ENCODE measurements at regions of chr1 and their contacts with region 1.

Region 1: GRCh38 chr1:95730985-95731384 is 497.0 kb downstream of the RWDD3 start:
- DNase-seq: no peak
- ATAC-seq: no peak
- H3K4me3 ChIP-seq: no peak overlapping the region
- H3K27ac ChIP-seq: no peak overlapping the region
- H3K4me1 ChIP-seq: no peaks in the 10 kb centered on the region
- H3K27me3 ChIP-seq: no peaks in the 10 kb centered on the region
- CTCF ChIP-seq: no peak
- POLR2A ChIP-seq: no peak
- RAD21 ChIP-seq: no peak

Region 2: DNA sequence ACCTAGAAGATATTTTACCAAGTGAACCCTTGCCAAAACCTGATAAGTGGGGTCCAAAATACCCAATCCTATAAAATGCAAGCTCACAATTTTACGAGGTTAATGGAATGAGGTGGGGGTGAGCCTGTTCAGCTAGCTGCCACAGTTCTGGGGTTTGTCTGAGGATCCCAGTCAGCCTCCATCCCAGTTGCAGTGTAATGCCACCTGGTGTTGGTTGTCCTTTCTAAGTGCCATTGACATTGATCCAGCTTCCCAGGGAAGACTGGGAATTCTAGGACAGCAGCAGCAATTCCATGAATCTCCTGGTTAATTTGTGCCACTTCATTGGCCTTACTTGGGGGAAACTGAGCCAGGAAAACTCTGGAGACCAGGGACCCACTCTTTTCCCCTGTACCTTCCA is 198.7 kb before region 1 on chr1:
- CTCF ChIA-PET with region 1: no interaction called
- POLR2A ChIA-PET with region 1: no interaction called
- dilution Hi-C with region 1: no loop called
- in situ Hi-C with region 1: no loop called
- intact Hi-C with region 1: no loop called
- DNase-seq: no peak
- ATAC-seq: no peak
- H3K4me3 ChIP-seq: no peak overlapping the region
- H3K27ac ChIP-seq: no peak overlapping the region
- H3K4me1 ChIP-seq: no peaks in the 10 kb centered on the region
- H3K27me3 ChIP-seq: no peaks in the 10 kb centered on the region
- CTCF ChIP-seq: no peak
- POLR2A ChIP-seq: no peak
- RAD21 ChIP-seq: no peak

Region 3: DNA sequence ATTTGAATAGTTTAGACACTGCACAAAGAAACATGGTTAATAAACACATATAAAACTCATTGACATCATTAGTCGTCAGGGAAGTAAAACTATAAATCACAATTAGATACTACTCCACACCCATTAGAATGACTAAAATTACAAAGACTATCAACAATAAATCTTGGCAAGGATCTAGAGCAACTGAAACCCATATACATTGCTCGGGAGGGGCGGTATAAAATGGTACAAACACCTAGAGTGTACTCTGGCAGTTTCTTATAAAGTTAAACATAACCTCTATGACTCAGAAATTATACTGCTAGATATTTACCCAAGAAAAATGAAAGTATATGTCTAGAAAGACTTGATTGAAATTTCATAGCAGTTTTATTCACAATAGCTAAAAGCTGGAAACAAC is 62.8 kb before region 1 on chr1:
- CTCF ChIA-PET with region 1: no interaction called
- POLR2A ChIA-PET with region 1: no interaction called
- dilution Hi-C with region 1: no loop called
- in situ Hi-C with region 1: no loop called
- intact Hi-C with region 1: no loop called
- DNase-seq: no peak
- ATAC-seq: no peak
- H3K4me3 ChIP-seq: no peak overlapping the region
- H3K27ac ChIP-seq: no peak overlapping the region
- H3K4me1 ChIP-seq: no peaks in the 10 kb centered on the region
- H3K27me3 ChIP-seq: no peaks in the 10 kb centered on the region
- CTCF ChIP-seq: no peak
- POLR2A ChIP-seq: no peak
- RAD21 ChIP-seq: no peak

Region 4: DNA sequence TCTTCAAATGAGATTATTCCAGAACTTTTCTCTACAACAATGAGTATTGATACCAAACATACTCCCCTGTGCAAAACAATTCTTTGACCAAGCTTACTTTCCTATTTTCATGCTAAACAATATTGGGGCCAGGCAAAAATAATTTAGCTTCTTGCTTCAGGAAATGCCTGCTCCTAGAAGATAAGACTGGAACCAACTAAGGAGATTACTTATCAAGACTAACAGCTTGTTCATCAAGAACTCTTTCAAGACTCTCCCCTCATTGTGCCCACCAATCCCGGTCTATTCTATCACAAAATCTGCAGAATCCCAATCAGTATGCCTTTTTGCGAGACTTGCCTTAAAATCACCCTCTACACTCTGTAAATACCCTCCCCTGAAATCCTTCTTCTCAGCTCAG is 39.6 kb after region 1 on chr1:
- CTCF ChIA-PET with region 1: no interaction called
- POLR2A ChIA-PET with region 1: no interaction called
- dilution Hi-C with region 1: no loop called
- in situ Hi-C with region 1: no loop called
- intact Hi-C with region 1: loop called (anchors 2 kb)
- DNase-seq: no peak
- ATAC-seq: no peak
- H3K4me3 ChIP-seq: no peak overlapping the region
- H3K27ac ChIP-seq: no peak overlapping the region
- H3K4me1 ChIP-seq: no peaks in the 10 kb centered on the region
- H3K27me3 ChIP-seq: no peaks in the 10 kb centered on the region
- CTCF ChIP-seq: no peak
- POLR2A ChIP-seq: no peak
- RAD21 ChIP-seq: no peak

Region 5: GRCh38 chr1:96009831-96010434 is 278.9 kb after region 1 on chr1:
- CTCF ChIA-PET with region 1: no interaction called
- POLR2A ChIA-PET with region 1: no interaction called
- dilution Hi-C with region 1: no loop called
- in situ Hi-C with region 1: no loop called
- intact Hi-C with region 1: loop called (anchors 10 kb)
- DNase-seq: no peak
- ATAC-seq: no peak
- H3K4me3 ChIP-seq: no peak overlapping the region
- H3K27ac ChIP-seq: no peak overlapping the region
- H3K4me1 ChIP-seq: no peaks in the 10 kb centered on the region
- H3K27me3 ChIP-seq: no peaks in the 10 kb centered on the region
- CTCF ChIP-seq: no peak
- POLR2A ChIP-seq: no peak
- RAD21 ChIP-seq: no peak